GM10248 (cell line): ENCODE measurements at regions of chr7 and their contacts with region 1.

Region 1: GRCh38 chr7:142711746-142712619 is 37.3 kb upstream of the PRSS1 start:
- DNase-seq: no peak
- CTCF ChIP-seq: peak; percentile 53

Region 2: GRCh38 chr7:142603870-142604448 is 108.0 kb before region 1 on chr7:
- CTCF ChIA-PET with region 1: interaction called, 10 read pairs
- POLR2A ChIA-PET with region 1: no interaction called
- DNase-seq: peak; percentile 62
- CTCF ChIP-seq: peak; percentile 81

Region 3: GRCh38 chr7:142788303-142789289 is 76.6 kb after region 1 on chr7:
- CTCF ChIA-PET with region 1: interaction called, 42 read pairs
- POLR2A ChIA-PET with region 1: no interaction called
- DNase-seq: no peak
- CTCF ChIP-seq: no peak

Region 4: DNA sequence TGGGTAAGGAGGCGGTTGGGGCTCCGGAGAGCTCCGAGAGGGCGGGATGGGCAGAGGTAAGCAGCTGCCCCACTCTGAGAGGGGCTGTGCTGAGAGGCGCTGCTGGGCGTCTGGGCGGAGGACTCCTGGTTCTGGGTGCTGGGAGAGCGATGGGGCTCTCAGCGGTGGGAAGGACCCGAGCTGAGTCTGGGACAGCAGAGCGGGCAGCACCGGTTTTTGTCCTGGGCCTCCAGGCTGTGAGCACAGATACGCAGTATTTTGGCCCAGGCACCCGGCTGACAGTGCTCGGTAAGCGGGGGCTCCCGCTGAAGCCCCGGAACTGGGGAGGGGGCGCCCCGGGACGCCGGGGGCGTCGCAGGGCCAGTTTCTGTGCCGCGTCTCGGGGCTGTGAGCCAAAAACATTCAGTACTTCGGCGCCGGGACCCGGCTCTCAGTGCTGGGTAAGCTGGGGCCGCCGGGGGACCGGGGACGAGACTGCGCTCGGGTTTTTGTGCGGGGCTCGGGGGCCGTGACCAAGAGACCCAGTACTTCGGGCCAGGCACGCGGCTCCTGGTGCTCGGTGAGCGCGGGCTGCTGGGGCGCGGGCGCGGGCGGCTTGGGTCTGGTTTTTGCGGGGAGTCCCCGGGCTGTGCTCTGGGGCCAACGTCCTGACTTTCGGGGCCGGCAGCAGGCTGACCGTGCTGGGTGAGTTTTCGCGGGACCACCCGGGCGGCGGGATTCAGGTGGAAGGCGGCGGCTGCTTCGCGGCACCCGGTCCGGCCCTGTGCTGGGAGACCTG is 84.8 kb after region 1 on chr7:
- CTCF ChIA-PET with region 1: interaction called, 14 read pairs
- POLR2A ChIA-PET with region 1: no interaction called
- DNase-seq: peak; percentile 43
- CTCF ChIP-seq: no peak